ENCODE measurements at regions of chr20 and their contacts with region 1.

Region 1: GRCh38 chr20:44866703-44867335 is 18.7 kb upstream of the YWHAB start:
- DNase-seq: no peak
- ATAC-seq: peak; percentile 23
- H3K4me3 Mint-ChIP-seq: peak overlapping the region; percentile 57
- H3K27ac Mint-ChIP-seq: no peak overlapping the region
- H3K4me1 Mint-ChIP-seq: peaks cover 13% of the 10 kb centered on the region
- H3K27me3 Mint-ChIP-seq: peaks cover 7% of the 10 kb centered on the region

Region 2: DNA sequence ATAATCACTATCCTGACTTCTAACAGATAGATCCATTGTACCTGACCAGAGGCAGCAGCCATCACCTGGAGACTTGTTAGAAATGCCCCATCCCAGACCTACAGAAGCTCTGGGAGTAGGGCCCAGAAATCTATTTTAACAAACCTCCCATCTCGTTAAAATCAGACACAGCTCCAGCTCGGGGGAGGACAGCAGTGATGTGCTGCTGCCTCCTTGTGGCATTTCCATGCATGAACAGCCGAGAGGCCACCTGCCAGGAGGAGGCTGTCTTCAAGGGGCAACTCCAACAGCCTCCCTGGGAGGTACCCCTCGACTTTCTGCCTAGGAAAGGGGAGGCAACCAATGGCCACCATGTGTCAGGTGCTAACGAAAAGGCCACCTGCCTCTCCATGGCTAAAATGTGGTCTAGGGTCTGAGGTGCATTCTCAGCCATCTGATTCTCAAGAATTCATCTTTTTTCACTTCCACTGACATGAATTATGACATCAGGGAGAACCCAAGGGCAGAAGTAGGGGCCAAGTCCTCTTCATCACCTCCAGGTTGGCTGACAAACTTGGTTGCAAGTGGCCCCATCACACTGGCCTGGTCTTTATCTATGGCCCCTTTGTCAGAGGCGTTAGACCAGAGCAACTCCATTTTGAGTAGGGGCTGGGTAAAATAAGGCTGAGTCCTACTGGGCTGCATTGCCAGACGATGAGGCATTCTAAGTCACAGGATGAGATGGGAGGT is 133.3 kb before region 1 on chr20:
- CTCF ChIA-PET with region 1: interaction called, 6 read pairs
- POLR2A ChIA-PET with region 1: no interaction called
- intact Hi-C with region 1: loop called in 1 of 2 experiments (anchors 1 kb)
- DNase-seq: peak; percentile 82
- ATAC-seq: peak; percentile 64
- H3K4me3 Mint-ChIP-seq: no peak overlapping the region
- H3K27ac Mint-ChIP-seq: no peak overlapping the region
- H3K4me1 Mint-ChIP-seq: peaks cover 26% of the 10 kb centered on the region
- H3K27me3 Mint-ChIP-seq: no peaks in the 10 kb centered on the region

Region 3: GRCh38 chr20:44747166-44748004 is 119.4 kb before region 1 on chr20:
- CTCF ChIA-PET with region 1: interaction called, 30 read pairs
- POLR2A ChIA-PET with region 1: no interaction called
- intact Hi-C with region 1: loop called (anchors 1 kb)
- DNase-seq: peak; percentile 87
- ATAC-seq: peak; percentile 60
- H3K4me3 Mint-ChIP-seq: peak overlapping the region; percentile 76
- H3K27ac Mint-ChIP-seq: peak overlapping the region; percentile 84
- H3K4me1 Mint-ChIP-seq: peaks cover 19% of the 10 kb centered on the region
- H3K27me3 Mint-ChIP-seq: peaks cover 21% of the 10 kb centered on the region

Region 4: DNA sequence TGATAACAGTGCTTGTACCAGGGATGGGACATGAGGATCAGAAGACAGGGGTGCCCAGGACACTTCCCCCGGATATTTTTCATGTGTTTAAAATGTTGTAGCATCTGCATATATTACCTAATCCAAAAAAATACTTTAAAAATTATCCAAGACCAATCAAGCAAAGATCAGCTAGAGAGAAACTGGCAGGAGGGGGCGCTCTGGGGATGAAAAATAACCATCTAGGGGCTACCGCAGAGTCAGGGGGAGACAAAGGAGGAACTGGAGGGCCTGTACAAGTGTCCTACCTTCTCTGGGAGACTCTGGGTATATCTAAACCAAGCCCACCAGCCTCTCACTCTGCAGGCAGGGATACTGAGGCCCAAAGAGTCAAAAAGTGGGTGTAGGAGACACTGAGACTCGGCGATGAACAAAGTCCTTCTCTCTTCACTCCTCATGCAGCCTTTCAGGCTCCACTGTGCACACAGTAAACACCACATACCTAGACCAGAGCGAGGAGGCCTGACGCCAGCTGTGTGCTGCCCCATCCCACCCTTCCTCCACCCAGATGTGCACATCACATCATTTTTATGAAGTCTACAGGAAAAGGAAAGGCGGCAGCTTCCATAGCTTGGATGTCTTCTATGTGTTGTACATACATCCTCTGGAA is 66.3 kb before region 1 on chr20:
- CTCF ChIA-PET with region 1: interaction called, 6 read pairs
- POLR2A ChIA-PET with region 1: no interaction called
- intact Hi-C with region 1: loop called (anchors 1 to 5 kb)
- DNase-seq: peak; percentile 40
- ATAC-seq: no peak
- H3K4me3 Mint-ChIP-seq: no peak overlapping the region
- H3K27ac Mint-ChIP-seq: no peak overlapping the region
- H3K4me1 Mint-ChIP-seq: no peaks in the 10 kb centered on the region
- H3K27me3 Mint-ChIP-seq: peaks cover 17% of the 10 kb centered on the region

Region 5: DNA sequence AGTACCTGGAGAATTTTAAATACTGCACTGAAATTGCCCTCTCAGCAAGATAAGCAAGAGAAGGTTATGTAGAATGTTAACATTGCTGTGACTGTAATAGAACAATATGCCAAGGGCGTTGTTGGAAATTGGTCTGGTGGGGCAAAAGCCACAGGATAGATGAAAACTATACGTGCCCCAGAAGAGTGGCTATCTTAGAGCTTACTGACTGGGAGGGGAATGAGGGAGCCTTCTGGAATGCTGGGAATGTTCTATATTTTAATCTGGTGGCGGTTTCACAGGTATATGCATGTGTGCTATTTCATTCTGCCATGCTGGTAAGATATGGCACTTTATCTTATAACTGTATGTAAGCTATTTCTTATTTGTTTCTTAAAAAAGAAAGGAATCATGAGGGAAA is 16.5 kb before region 1 on chr20:
- CTCF ChIA-PET with region 1: no interaction called
- POLR2A ChIA-PET with region 1: no interaction called
- intact Hi-C with region 1: no loop called
- DNase-seq: no peak
- ATAC-seq: no peak
- H3K4me3 Mint-ChIP-seq: no peak overlapping the region
- H3K27ac Mint-ChIP-seq: no peak overlapping the region
- H3K4me1 Mint-ChIP-seq: no peaks in the 10 kb centered on the region
- H3K27me3 Mint-ChIP-seq: peaks cover 11% of the 10 kb centered on the region

Region 6: DNA sequence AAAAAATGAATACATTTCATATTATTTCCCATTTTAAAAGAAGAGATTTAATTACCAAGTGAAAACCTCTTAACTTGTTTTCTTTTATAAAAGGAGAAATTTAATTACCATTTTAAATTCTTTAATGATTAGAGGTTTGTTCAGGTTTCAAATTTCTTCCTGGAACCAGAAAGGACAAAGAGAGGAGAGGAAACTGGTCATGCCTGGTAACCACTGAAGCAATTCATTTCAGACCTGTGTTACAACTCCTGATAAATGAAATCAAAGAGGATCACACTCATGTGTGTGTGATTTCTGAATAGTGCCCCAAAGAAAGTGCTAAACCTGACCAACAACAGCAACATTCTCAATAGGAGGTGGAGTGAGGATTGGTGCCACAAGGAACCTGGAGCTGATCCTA is 400.2 kb after region 1 on chr20:
- CTCF ChIA-PET with region 1: no interaction called
- POLR2A ChIA-PET with region 1: no interaction called
- intact Hi-C with region 1: no loop called
- DNase-seq: no peak
- ATAC-seq: no peak
- H3K4me3 Mint-ChIP-seq: no peak overlapping the region
- H3K27ac Mint-ChIP-seq: no peak overlapping the region
- H3K4me1 Mint-ChIP-seq: no peaks in the 10 kb centered on the region
- H3K27me3 Mint-ChIP-seq: peaks cover 23% of the 10 kb centered on the region

Measured in activated CD4-positive, alpha-beta T cell treated with anti-CD3 and anti-CD28 coated beads for 36 hours (primary cell).